Posterior vena cava (tissue), 2 donors: ENCODE measurements at regions of chr12 and their contacts with region 1.

Region 1: DNA sequence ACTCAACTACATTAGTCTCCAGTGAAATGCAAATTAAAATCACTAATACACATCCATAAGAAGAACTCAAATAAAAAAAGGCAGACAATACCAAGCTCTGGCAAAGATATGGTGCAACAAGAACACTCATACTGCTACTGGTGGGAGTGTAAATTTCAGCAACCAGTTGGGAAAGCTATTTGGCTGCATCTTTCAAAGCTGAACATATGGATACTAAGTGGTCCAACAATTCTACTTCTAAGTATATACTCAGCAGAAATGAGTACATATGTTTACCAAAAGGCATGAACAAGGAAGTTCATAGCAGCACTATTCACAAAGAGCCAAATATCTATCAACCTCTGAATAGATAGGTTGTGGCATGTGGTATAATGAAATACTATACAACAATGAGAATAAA is 27.3 kb downstream of the CAPS2 start:
- DNase-seq: no peak

Region 2: GRCh38 chr12:73950507-73950906 is 1352.3 kb before region 1 on chr12:
- intact Hi-C with region 1: loop called in 1 of 2 experiments (anchors 5 kb)
- DNase-seq: no peak

Region 3: DNA sequence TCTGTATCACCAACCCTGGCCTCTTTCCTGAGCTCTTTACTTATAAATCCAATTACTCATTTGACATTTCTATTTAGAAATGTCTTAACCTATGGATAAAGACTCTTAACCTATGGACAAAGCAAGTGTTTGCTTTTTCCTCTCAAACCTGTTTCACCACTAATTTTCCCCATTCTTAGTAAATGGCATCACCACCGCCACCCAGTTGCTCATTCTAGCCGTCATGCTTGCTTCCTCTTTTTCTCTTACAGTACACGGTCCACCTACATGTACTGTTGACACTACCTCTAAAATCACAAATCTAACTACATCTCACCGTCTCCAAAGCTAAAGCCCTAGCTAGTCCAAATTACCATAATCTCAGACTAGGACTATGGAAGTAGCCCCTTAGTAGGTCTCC is 32.6 kb before region 1 on chr12:
- intact Hi-C with region 1: no loop called
- DNase-seq: no peak

Region 4: DNA sequence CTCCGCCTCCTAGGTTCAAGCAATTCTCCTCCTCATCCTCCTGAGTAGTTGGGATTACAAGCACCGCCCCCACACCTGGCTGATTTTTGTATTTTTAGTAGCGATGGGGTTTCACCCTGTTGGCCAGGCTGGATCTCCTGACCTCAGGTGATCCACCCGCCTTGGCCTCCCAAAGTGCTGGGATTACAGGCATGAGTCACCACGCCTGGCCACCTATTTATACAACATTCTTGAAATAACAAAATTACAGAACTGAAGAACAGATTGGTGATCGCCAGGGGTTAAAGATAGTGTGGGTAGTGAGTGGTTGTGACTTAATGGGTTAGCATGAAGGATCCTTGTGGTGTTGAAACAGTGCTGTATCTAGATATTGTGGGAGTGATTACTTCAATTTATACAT is 39.1 kb after region 1 on chr12:
- intact Hi-C with region 1: no loop called
- DNase-seq: no peak

Region 5: GRCh38 chr12:76216585-76217472 is 914.0 kb after region 1 on chr12:
- intact Hi-C with region 1: no loop called
- DNase-seq: no peak

Region 6: DNA sequence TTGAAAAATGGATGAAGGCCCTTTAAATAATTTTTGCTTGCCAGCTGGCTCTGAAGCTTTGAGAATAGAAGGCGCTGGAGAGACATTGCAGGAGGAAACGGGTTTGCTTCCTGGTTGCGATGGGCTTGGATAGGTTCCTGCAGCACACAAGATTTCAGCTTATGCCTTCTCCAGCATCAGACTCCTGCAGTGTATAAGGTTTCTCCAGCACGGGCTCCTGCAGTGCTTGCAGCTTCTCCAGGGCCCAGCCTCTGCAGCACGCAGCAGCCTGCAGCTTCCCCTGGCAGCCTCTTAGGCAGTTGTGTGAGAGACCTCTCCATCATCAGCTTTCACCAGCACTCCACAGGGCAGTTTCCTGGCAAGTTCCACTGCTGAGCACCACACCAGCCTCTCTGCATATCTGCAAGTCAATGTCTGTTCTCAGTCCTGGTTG is 1382.5 kb after region 1 on chr12:
- intact Hi-C with region 1: no loop called
- DNase-seq: no peak